HepG2 (cell line): ENCODE measurements at regions of chr12 and their contacts with region 1.

Region 1: DNA sequence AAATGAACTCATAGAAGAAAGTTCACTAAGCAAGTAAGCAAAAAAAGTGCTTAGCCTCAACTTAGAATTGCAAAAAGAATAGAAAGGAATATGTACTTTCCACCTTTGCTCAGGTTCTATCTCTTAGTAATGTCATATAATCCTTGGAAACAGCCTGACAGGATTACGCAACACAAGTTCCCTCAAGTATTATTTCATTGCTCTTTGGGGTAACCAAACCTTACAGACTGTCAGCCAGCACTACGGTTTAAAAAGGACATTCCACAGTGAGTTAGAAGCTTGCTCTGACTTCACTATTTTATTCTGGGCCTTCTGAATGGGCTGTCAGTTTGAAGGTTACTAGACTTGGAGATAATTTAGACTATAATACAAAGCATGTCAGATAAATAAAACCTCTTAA is 264.0 kb downstream of the ATXN7L3B start:
- DNase-seq: no peak
- ATAC-seq: no peak
- H3K4me3 ChIP-seq: no peak overlapping the region
- H3K27ac ChIP-seq: no peak overlapping the region
- H3K4me1 ChIP-seq: no peaks in the 10 kb centered on the region
- H3K27me3 ChIP-seq: no peaks in the 10 kb centered on the region
- CTCF ChIP-seq: no peak
- EP300 ChIP-seq: no peak
- POLR2A ChIP-seq: no peak
- RAD21 ChIP-seq: no peak

Region 2: GRCh38 chr12:74903522-74903921 is 101.9 kb after region 1 on chr12:
- CTCF ChIA-PET with region 1: no interaction called
- POLR2A ChIA-PET with region 1: no interaction called
- in situ Hi-C with region 1: no loop called
- intact Hi-C with region 1: loop called (anchors 10 kb)
- DNase-seq: peak; percentile 9
- ATAC-seq: no peak; the same call in 2 of the 3 replicates
- H3K4me3 ChIP-seq: no peak overlapping the region
- H3K27ac ChIP-seq: no peak overlapping the region
- H3K4me1 ChIP-seq: no peaks in the 10 kb centered on the region
- H3K27me3 ChIP-seq: no peaks in the 10 kb centered on the region; a peak in 1 of 5 replicates
- CTCF ChIP-seq: peak; percentile 26; the same call in 1 of the 2 replicates
- EP300 ChIP-seq: no peak
- POLR2A ChIP-seq: no peak
- RAD21 ChIP-seq: no peak

Region 3: DNA sequence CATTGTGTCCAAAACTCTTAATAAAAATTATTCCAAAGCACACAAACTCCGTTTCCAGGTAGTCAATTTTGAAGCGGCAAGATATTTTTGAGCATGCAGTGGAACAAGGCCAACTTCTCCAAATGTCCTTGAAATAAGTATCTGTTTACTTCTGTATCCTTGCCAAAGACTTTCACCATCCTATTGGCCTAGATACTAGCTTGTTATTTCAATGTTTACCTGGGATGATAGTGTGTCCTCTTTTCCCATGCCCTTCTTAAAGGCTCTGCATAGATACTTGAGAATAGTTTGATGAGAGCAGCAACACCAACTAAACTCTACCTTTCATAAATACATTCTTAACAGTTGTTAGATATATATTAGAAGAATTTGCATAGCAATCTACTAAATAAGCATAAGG is 247.1 kb after region 1 on chr12:
- CTCF ChIA-PET with region 1: no interaction called
- POLR2A ChIA-PET with region 1: no interaction called
- in situ Hi-C with region 1: no loop called
- intact Hi-C with region 1: no loop called
- DNase-seq: no peak
- ATAC-seq: no peak
- H3K4me3 ChIP-seq: no peak overlapping the region
- H3K27ac ChIP-seq: no peak overlapping the region
- H3K4me1 ChIP-seq: no peaks in the 10 kb centered on the region
- H3K27me3 ChIP-seq: no peaks in the 10 kb centered on the region
- CTCF ChIP-seq: no peak
- EP300 ChIP-seq: no peak
- POLR2A ChIP-seq: no peak
- RAD21 ChIP-seq: no peak

Region 4: GRCh38 chr12:75087654-75088053 is 286.0 kb after region 1 on chr12:
- CTCF ChIA-PET with region 1: no interaction called
- POLR2A ChIA-PET with region 1: no interaction called
- in situ Hi-C with region 1: no loop called
- intact Hi-C with region 1: loop called (anchors 1 kb)
- DNase-seq: no peak
- ATAC-seq: no peak
- H3K4me3 ChIP-seq: no peak overlapping the region
- H3K27ac ChIP-seq: no peak overlapping the region
- H3K4me1 ChIP-seq: no peaks in the 10 kb centered on the region
- H3K27me3 ChIP-seq: no peaks in the 10 kb centered on the region
- CTCF ChIP-seq: 0 out of 2 replicates have a peak, but pooled peaks have one; percentile 22
- EP300 ChIP-seq: no peak
- POLR2A ChIP-seq: no peak
- RAD21 ChIP-seq: no peak

Region 5: GRCh38 chr12:75289753-75290152 is 488.1 kb after region 1 on chr12:
- CTCF ChIA-PET with region 1: no interaction called
- POLR2A ChIA-PET with region 1: no interaction called
- in situ Hi-C with region 1: no loop called
- intact Hi-C with region 1: loop called (anchors 1 kb)
- DNase-seq: no peak
- ATAC-seq: no peak
- H3K4me3 ChIP-seq: no peak overlapping the region
- H3K27ac ChIP-seq: no peak overlapping the region
- H3K4me1 ChIP-seq: no peaks in the 10 kb centered on the region
- H3K27me3 ChIP-seq: no peaks in the 10 kb centered on the region
- CTCF ChIP-seq: no peak
- EP300 ChIP-seq: no peak
- POLR2A ChIP-seq: no peak
- RAD21 ChIP-seq: no peak